BJ (cell line): ENCODE measurements at regions of chr2 and their contacts with region 1.

Region 1: GRCh38 chr2:126971481-126972278 is 73.0 kb downstream of the TEX51 start:
- DNase-seq: no peak
- H3K4me3 ChIP-seq: peak overlapping the region; percentile 41
- H3K27me3 ChIP-seq: peaks cover 8% of the 10 kb centered on the region
- CTCF ChIP-seq: peak; percentile 96

Region 2: DNA sequence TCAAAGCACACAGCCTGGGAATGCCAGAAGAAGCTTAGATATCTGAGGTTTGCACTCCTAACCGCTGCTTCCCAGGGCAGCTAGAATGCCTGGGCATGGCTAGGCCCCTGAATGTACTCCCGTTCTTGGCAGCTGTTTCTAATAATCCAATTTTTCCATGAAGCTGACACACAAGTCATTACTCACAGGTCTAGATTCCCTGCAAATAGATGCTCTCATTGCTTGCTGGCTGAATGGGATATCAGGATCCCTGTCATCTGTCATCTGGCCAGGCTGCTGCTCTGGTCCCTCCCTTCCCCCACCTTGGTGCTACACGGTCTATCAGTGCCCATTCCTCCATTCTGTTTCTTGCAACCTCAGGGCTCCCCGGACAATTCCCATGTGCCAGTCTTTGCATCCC is 113.7 kb before region 1 on chr2:
- CTCF ChIA-PET with region 1: no interaction called
- POLR2A ChIA-PET with region 1: no interaction called
- DNase-seq: no peak
- H3K4me3 ChIP-seq: no peak overlapping the region
- H3K27me3 ChIP-seq: no peaks in the 10 kb centered on the region
- CTCF ChIP-seq: no peak

Region 3: DNA sequence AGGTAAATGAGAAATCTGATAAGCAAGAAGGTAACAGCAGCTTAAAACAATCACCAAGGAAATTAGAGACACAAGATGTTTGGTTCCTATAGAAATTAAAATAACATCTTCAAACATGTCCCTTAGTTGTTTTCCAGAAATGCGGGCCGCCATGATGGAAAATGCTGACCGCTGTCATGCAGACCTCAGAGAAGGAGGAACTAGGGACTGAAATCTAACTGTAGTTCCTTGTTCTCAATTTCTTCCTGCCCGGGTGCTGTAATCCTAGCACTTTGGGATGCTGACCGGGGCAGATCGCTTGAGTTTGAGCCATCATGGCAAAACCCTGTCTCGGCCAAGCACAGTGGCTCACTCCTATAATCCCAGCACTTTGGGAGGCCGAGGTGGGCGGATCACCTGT is 21.9 kb before region 1 on chr2:
- CTCF ChIA-PET with region 1: interaction called, 10 read pairs
- POLR2A ChIA-PET with region 1: no interaction called
- DNase-seq: no peak
- H3K4me3 ChIP-seq: no peak overlapping the region
- H3K27me3 ChIP-seq: no peaks in the 10 kb centered on the region
- CTCF ChIP-seq: no peak

Region 4: DNA sequence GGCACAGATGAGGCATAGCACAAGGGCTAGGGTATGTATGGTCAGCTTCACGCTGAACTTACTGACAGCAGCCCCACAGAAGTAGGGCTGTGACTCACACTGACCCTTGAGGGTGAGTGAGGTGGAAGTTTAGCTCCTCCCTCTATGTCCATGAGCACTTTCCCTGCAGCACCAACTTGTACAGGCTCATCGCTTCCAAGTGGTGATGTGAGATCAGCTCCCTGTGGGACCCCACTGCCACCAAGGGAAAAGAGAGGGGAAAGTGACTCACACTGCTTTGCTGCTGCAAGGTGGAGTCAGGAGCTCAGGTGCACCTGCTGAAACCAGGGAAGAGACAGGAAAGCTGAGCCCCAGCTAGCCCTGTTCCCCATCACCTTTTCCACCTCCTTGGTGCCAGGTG is 18.5 kb after region 1 on chr2:
- CTCF ChIA-PET with region 1: interaction called, 10 read pairs
- POLR2A ChIA-PET with region 1: no interaction called
- DNase-seq: no peak
- H3K4me3 ChIP-seq: no peak overlapping the region
- H3K27me3 ChIP-seq: peaks cover 6% of the 10 kb centered on the region; the same call in 1 of the 2 replicates
- CTCF ChIP-seq: no peak